PC-3 (cell line): ENCODE measurements at regions of chr3 and their contacts with region 1.

Region 1: DNA sequence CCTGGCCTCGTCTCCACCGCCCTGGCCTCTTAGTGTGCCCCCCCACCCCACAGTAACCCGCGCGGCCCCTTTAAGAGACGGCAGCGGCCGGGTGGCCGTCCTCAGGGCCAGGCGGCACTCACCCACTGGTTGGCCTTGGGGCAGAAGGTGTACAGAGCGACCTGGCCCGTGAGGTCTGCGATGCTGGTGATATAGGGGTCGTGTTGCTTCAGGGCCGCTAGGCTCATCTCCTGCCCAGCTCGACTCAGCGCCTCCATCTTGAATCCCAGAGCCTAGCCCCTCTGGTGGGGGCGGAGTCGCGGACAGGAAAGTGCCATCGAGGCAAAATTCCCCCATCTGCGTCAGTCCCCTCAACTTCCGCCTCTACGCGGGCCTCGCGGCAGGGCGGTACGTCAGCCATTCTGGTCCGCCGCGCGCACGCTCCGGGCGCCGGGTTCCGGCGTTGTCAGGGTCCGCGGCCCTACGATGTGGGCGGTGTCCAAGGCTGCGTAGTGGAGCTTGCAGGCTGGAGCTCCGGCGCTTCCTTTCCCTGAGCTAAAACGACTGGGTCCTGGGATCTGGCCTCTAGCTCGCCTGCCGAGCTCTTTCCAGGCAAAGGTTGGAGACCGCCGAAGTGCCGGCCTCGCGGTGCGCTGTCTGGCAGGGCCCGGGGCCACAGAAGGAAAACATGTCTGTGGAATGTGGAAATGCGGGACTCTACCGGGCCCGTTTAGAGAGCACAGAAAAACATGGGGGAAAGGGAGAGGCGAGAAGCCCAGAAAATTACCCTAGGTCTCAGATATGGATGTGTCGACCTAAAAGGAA is at the start of gene DCP1A:
- DNase-seq: peak; percentile 97
- ATAC-seq: peak; percentile 92
- H3K4me3 ChIP-seq: peak within 1 kb of the TSS; percentile 75
- H3K27ac ChIP-seq: peak within 1 kb of the TSS; percentile 65
- H3K4me1 ChIP-seq: peaks cover 19% of the 10 kb centered on the region
- H3K27me3 ChIP-seq: no peaks in the 10 kb centered on the region
- CTCF ChIP-seq: no peak
- total RNA-seq, gene DCP1A: 12.7 and 16.8 TPM in 2 replicates

Region 2: DNA sequence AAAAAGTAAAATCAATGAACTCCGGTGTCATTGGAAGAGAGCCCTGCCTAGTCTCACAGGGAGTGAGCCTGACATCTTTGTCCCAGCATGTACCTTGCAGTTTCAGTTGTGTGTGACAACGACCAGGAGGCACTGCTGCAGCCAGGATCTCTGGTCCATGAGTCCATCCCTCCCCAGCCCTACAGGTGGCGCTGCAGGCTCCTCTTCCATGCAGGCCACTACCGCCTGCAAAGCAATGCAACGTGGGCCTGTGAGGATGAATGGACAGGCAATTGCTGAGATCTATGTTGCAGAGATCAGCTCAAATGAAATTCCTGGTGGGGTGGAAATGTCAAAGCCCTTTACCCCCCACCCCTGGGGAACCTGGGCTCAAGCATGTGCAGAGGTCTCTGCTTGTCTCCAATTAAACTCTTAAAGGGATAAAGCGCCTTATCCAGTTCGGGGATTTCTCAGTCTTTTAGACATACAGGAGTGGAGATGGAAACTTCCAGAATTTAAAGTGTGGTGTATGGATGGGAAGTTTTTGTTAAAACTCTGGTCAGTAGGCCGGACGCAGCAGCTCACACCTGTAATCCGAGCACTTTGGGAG is 127.5 kb before region 1 on chr3:
- CTCF ChIA-PET with region 1: no interaction called
- POLR2A ChIA-PET with region 1: no interaction called
- intact Hi-C with region 1: loop called (anchors 1 kb)
- DNase-seq: peak; percentile 94
- ATAC-seq: peak; percentile 95
- H3K4me3 ChIP-seq: no peak overlapping the region
- H3K27ac ChIP-seq: no peak overlapping the region
- H3K4me1 ChIP-seq: no peaks in the 10 kb centered on the region
- H3K27me3 ChIP-seq: no peaks in the 10 kb centered on the region
- CTCF ChIP-seq: peak; percentile 97

Region 3: DNA sequence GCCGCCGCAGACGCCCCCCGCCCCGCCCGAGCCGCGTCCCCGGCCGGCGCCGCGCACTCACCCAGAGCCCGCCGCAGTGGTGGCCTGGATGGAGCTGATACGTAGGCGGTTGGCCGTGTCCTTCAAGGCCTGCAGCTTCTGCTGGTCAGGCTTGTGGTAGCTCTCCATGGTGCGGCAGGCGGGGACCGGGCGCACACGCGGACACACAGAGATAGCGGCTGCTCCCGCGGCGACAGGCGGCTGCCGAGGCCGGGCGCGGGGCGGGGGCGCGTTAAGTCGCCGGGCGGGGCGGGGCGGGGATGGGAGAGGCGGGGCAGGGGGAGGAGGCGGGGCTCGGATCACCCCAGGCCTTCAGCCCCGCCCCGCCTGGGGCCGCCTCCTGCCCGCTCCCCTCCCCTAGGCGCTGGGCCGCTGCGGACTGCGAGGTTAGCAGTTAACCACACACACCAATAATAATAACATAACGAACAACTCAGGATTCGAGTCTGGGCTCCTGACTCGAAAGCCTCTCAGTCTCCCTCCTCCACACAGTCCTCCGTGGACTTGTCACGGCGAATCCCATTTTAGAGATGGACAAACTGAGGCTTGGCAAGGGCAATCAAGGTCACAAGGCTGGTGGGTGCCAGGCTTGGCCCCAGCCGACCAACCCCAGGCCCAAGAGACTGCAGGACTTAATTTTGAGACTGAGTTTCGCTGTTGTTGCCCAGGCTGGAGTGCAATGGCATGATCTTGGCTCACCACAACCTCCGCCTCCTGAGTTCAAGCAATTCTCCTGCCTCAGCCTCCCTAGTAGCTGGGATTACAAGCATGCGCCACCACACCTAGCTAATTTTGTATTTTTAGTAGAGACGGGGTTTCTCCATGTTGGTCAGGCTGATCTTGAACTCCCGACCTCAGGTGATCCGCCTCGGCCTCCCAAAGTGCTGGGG is 91.4 kb before region 1 on chr3 and contains the start of gene TKT:
- CTCF ChIA-PET with region 1: no interaction called
- POLR2A ChIA-PET with region 1: no interaction called
- intact Hi-C with region 1: loop called (anchors 5 kb)
- DNase-seq: peak; percentile 84
- ATAC-seq: peak; percentile 73
- H3K4me3 ChIP-seq: peak within 1 kb of the TSS; percentile 96
- H3K27ac ChIP-seq: peak within 1 kb of the TSS; percentile 50
- H3K4me1 ChIP-seq: peaks cover 30% of the 10 kb centered on the region
- H3K27me3 ChIP-seq: no peaks in the 10 kb centered on the region
- CTCF ChIP-seq: no peak
- total RNA-seq, gene TKT: 380 and 486 TPM in 2 replicates

Region 4: DNA sequence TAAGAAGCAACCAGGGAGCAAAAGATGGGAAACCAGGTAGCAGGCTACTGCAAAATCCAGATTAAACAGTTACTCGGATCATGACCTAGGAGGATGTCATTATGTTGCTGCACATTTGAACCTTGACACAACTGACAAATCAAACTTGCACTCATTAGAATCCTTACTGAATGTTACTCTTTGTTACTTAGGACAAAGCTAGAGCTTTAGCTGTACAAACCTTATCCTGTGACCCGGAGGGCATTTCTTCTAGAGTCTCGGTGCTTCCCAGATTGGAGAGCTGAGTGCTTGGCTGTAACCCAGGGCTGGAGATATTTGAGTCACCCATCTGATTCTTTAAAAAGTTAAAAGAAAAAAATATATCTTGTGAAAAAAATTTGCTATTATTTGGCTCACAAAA is 43.5 kb before region 1 on chr3:
- CTCF ChIA-PET with region 1: no interaction called
- POLR2A ChIA-PET with region 1: no interaction called
- intact Hi-C with region 1: loop called (anchors 1 kb)
- DNase-seq: no peak
- ATAC-seq: no peak
- H3K4me3 ChIP-seq: no peak overlapping the region
- H3K27ac ChIP-seq: no peak overlapping the region
- H3K4me1 ChIP-seq: no peaks in the 10 kb centered on the region
- H3K27me3 ChIP-seq: no peaks in the 10 kb centered on the region
- CTCF ChIP-seq: no peak

Region 5: DNA sequence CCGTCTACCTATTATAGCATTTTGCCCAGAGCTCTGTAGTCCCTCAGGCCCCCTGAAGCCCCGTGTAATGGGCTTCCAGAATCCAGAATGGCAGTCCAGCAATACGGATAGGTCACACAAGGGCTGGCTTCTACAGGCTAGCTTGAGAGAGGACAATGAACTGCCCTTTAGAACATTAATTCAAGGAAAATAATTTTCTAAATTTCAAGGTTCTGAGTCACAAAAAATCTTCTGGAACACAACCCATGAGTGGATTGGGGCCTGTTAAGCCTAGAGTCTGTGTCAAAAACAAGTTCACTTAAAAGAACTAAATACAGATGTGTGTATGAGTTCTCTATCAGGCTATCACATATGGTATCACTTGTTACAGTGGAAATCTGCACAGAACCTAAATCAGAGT is 28.9 kb before region 1 on chr3:
- CTCF ChIA-PET with region 1: no interaction called
- POLR2A ChIA-PET with region 1: no interaction called
- intact Hi-C with region 1: no loop called
- DNase-seq: no peak
- ATAC-seq: no peak
- H3K4me3 ChIP-seq: no peak overlapping the region
- H3K27ac ChIP-seq: no peak overlapping the region
- H3K4me1 ChIP-seq: peaks cover 4% of the 10 kb centered on the region; the same call in 1 of the 2 replicates
- H3K27me3 ChIP-seq: no peaks in the 10 kb centered on the region
- CTCF ChIP-seq: no peak

Region 6: GRCh38 chr3:53604232-53604631 is 256.8 kb after region 1 on chr3:
- CTCF ChIA-PET with region 1: no interaction called
- POLR2A ChIA-PET with region 1: interaction called, 12 read pairs
- intact Hi-C with region 1: no loop called
- DNase-seq: no peak
- ATAC-seq: no peak
- H3K4me3 ChIP-seq: no peak overlapping the region
- H3K27ac ChIP-seq: no peak overlapping the region
- H3K4me1 ChIP-seq: no peaks in the 10 kb centered on the region
- H3K27me3 ChIP-seq: peaks cover 74% of the 10 kb centered on the region
- CTCF ChIP-seq: no peak

Region 7: GRCh38 chr3:53891497-53892285 is 544.2 kb after region 1 on chr3 and contains the start of gene SELENOK:
- CTCF ChIA-PET with region 1: no interaction called
- POLR2A ChIA-PET with region 1: no interaction called
- intact Hi-C with region 1: loop called (anchors 5 kb)
- DNase-seq: peak; percentile 99
- ATAC-seq: peak; percentile 95
- H3K4me3 ChIP-seq: peak within 1 kb of the TSS; percentile 84
- H3K27ac ChIP-seq: peak within 1 kb of the TSS; percentile 59
- H3K4me1 ChIP-seq: peaks cover 17% of the 10 kb centered on the region
- H3K27me3 ChIP-seq: peaks cover 10% of the 10 kb centered on the region; the same call in 1 of the 2 replicates
- CTCF ChIP-seq: no peak
- total RNA-seq, gene SELENOK: 55.3 and 72.9 TPM in 2 replicates